Activated CD8-positive, alpha-beta T cell treated with anti-CD3 and anti-CD28 coated beads for 36 hours (primary cell): ENCODE measurements at regions of chr1 and their contacts with region 1.

Region 1: DNA sequence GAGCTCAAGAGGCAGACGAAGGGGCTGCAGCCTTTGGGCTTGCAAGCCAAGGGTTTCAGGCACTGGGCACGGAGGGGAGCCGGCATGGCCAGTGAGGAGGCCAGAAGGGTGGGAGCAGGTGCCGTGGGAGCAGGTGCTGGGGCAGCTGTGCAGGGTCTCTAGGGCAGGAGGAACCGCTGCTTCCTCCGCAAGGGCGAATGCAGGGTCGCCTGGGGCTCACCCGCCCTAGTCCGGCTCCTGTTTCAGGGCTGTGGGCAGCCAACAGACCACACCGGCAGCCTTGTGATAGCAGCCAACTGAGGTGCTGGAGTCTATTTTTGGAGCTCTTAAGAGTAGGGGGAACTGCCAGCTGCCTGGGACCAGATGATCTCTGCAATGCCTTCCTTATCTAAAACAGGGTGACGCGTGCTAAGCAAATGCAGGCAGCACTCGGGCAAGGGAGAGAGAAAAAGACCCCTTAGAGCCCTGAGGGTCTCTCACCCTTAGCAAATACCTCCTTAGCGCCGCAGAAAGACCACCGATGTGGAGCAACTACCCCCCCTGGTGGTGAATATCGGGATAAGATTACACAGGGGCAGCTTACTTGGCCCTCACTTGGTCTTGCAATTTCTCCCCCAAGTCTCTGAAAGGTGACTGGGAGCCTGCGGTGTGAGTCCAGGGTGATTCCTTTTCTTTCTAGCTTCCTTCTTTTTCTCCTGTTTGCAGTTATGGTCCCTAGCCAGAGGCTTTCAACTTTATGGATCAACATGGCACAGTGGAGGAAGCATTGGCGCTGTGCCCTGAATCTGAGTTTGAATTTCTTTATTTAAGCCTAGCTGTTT is 20.7 kb upstream of the MAPKAPK2 start:
- DNase-seq: peak; percentile 84
- ATAC-seq: peak; percentile 82
- H3K4me3 Mint-ChIP-seq: no peak overlapping the region
- H3K27ac Mint-ChIP-seq: no peak overlapping the region
- H3K4me1 Mint-ChIP-seq: peaks cover 33% of the 10 kb centered on the region
- H3K27me3 Mint-ChIP-seq: peaks cover 22% of the 10 kb centered on the region
- CTCF ChIP-seq: peak; percentile 92

Region 2: DNA sequence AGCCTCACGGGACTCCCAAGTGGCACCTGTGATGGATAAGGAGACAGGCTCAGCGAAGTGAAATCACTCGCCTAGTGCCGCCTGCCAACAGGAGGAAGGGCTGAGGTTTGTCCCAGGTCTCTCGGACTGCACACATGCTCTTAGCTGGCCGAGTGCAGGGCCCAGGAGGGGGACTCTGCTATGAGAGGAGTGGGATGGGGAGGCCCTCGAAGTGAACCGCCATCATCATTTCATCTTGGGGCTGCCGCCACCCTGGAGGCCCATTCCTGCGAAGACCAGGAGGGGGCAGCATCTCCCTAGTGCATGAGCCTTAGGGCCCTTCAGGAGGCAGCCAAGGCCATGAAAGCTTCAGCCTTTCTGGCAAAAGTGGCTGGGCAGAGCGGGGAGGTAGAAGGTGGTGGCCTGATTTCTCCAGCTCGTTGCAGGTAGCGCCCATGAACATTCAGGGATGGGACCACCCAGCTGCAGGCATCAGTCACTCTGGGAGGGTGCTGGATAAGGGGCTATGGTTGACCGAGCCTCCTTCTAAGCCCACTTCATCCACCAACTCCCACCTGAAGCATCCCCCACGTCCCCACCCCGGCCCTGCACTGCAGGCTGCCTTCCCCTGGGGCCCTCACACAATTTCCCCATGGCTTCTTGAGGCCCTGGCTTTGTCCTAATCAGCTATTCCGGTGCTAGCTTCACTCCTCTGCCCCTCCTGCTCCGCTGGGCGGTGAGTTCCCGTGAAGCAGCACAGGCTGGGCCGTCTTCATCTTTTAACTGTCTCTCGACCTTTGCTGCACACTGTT is 173.9 kb before region 1 on chr1:
- CTCF ChIA-PET with region 1: interaction called, 84 read pairs
- POLR2A ChIA-PET with region 1: interaction called, 4 read pairs
- intact Hi-C with region 1: loop called (anchors 5 kb)
- DNase-seq: peak; percentile 84
- ATAC-seq: peak; percentile 98
- H3K4me3 Mint-ChIP-seq: no peak overlapping the region
- H3K27ac Mint-ChIP-seq: peak overlapping the region; percentile 42
- H3K4me1 Mint-ChIP-seq: peaks cover 2% of the 10 kb centered on the region
- H3K27me3 Mint-ChIP-seq: no peaks in the 10 kb centered on the region
- CTCF ChIP-seq: peak; percentile 86

Region 3: DNA sequence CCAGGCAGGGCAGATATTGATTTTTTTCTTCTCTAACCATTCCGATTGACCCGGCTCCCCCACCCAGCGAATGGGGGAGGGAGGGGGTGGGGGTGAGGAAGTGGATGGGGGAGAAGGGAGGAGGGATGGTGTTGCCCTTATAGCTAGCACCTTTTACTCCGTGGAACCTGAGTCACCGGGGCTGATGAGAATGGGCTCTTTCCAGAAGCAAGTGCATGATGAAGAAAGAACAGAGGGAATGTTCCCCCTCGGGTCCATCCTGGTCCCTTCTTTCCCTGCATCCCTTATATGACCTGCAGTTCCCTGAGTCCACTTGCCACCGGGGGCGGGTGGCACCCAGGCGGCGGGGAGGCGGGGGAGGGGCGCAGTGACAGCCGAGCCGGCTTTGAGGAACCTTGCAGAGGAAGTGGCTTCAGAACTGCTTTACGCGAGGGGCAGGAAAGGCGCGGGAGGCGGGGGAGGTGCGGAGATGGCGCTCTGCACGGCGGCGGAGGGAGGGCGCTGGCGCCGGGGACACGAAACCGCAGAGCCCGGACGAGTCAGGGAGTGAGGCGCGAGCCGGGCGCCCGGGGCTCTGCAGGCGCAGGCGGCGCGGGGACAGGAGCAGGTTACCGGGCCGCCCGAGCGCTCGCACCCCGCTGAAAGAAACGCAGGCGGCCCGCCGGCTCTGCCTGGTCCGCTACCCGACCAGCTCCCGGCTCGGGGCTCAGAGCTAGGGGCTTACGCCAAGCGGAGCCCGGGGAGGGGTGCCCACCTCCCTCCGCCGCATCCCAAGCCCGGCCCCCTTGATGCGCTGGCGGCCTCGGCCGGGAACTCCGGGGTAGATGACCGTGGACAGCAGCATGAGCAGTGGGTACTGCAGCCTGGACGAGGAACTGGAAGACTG is 107.0 kb before region 1 on chr1:
- CTCF ChIA-PET with region 1: interaction called, 17 read pairs
- POLR2A ChIA-PET with region 1: no interaction called
- intact Hi-C with region 1: no loop called
- DNase-seq: peak; percentile 95
- ATAC-seq: peak; percentile 51
- H3K4me3 Mint-ChIP-seq: peak overlapping the region; percentile 96
- H3K27ac Mint-ChIP-seq: peak overlapping the region; percentile 100
- H3K4me1 Mint-ChIP-seq: peaks cover 59% of the 10 kb centered on the region
- H3K27me3 Mint-ChIP-seq: no peaks in the 10 kb centered on the region
- CTCF ChIP-seq: no peak

Region 4: GRCh38 chr1:206635080-206635977 is 28.7 kb before region 1 on chr1 and contains the start of gene DYRK3:
- CTCF ChIA-PET with region 1: interaction called, 340 read pairs
- POLR2A ChIA-PET with region 1: interaction called, 19 read pairs
- intact Hi-C with region 1: loop called (anchors 1 kb)
- DNase-seq: peak; percentile 93
- ATAC-seq: peak; percentile 93
- H3K4me3 Mint-ChIP-seq: peak within 1 kb of the TSS; percentile 78
- H3K27ac Mint-ChIP-seq: peak within 1 kb of the TSS; percentile 88
- H3K4me1 Mint-ChIP-seq: peaks cover 25% of the 10 kb centered on the region
- H3K27me3 Mint-ChIP-seq: peaks cover 28% of the 10 kb centered on the region
- CTCF ChIP-seq: no peak
- total RNA-seq, gene DYRK3: 4.7 to 4.9 TPM

Region 5: DNA sequence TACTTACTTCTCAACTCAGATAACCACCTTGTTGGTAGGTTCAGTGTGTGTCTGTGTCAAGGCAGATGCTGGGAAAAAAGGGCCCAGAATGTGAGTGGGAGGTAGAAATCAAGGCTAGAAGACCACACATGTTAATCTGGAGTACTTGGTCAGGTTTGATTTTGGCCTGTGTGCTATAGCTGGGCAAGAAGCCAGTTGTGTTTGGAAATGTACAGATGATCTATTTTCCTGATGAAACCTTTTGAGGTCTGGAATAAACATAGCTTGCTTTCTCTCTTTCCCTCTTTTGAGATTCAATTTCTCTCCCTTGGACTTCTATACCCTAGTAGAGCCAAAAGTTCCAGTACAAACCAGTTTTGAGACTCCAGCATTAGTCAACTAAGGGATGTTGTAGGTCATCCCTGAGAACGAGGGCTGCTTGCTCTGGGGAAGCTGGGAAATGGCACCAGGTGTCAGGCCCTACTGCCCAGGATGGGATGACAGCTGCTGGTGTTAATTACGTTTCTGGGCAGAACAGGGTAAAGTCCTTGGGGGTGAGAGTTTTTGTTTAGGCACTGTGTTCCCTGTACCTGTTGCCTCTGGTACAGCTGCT is 36.5 kb after region 1 on chr1:
- CTCF ChIA-PET with region 1: interaction called, 22 read pairs
- POLR2A ChIA-PET with region 1: interaction called, 3 read pairs
- intact Hi-C with region 1: no loop called
- DNase-seq: no peak
- ATAC-seq: no peak
- H3K4me3 Mint-ChIP-seq: no peak overlapping the region
- H3K27ac Mint-ChIP-seq: peak overlapping the region; percentile 8
- H3K4me1 Mint-ChIP-seq: peaks cover 73% of the 10 kb centered on the region
- H3K27me3 Mint-ChIP-seq: no peaks in the 10 kb centered on the region
- CTCF ChIP-seq: no peak

Region 6: GRCh38 chr1:206912445-206913095 is 248.5 kb after region 1 on chr1:
- CTCF ChIA-PET with region 1: interaction called, 15 read pairs
- POLR2A ChIA-PET with region 1: no interaction called
- intact Hi-C with region 1: no loop called
- DNase-seq: peak; percentile 77
- ATAC-seq: peak; percentile 45
- H3K4me3 Mint-ChIP-seq: no peak overlapping the region
- H3K27ac Mint-ChIP-seq: peak overlapping the region; percentile 63
- H3K4me1 Mint-ChIP-seq: peaks cover 86% of the 10 kb centered on the region
- H3K27me3 Mint-ChIP-seq: no peaks in the 10 kb centered on the region
- CTCF ChIP-seq: peak; percentile 80